Right ventricle myocardium inferior (tissue), 1 donor: ENCODE measurements at regions of chr17 and their contacts with region 1.

Region 1: GRCh38 chr17:65100316-65101140 is 36.6 kb upstream of the RGS9 start:
- DNase-seq: peak; percentile 96
- ATAC-seq: peak; percentile 95

Region 2: DNA sequence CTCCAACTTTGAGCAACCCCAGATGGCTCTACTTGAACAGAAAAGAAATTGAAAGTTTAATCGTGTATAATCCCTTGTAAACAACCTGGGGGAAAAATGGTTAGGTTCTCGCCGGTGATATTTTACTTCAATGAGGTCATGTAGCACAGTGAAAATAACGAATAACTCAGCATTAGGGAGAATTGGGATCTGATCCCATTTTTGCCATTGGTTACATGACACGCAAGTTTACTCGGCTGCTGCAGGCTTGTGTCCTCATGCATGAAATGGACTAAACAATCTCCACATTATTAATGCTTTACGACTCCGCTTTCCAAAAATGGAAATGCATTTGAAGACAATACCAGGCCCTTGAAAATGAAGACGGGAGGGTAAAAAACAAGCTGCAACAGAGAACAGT is 135.7 kb before region 1 on chr17:
- intact Hi-C with region 1: loop called (anchors 2 kb)
- DNase-seq: no peak
- ATAC-seq: no peak

Region 3: GRCh38 chr17:65055348-65056261 is 44.9 kb before region 1 on chr17:
- intact Hi-C with region 1: loop called (anchors 5 kb)
- DNase-seq: peak; percentile 85
- ATAC-seq: peak; percentile 29

Region 4: GRCh38 chr17:65074778-65075250 is 25.7 kb before region 1 on chr17:
- intact Hi-C with region 1: loop called (anchors 2 kb)
- DNase-seq: peak; percentile 82
- ATAC-seq: peak; percentile 91

Region 5: DNA sequence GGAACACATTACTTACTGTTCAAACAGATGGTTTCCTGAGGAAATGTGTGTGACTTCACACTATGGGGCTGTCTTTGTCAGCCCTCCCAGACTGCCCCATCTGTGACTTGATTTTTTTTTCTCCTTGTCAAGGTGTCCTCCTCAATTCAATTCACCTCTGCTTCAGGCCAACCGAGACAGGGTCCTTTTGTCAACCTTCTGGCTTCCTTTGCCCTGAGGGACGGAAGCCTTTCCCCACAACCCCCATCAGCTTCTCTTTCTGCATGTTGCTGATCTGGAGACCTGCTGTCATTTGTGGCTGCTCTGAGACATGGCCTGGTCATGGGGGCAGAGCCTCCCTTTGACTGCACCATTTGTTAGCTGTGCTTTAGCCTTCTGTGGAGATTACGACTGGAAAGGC is 15.3 kb after region 1 on chr17:
- intact Hi-C with region 1: no loop called
- DNase-seq: no peak
- ATAC-seq: no peak